Cardiac septum (tissue), 1 donor: ENCODE measurements at regions of chr10 and their contacts with region 1.

Region 1: GRCh38 chr10:94315024-94315451 is 47.7 kb downstream of the NOC3L start:
- DNase-seq: no peak

Region 2: DNA sequence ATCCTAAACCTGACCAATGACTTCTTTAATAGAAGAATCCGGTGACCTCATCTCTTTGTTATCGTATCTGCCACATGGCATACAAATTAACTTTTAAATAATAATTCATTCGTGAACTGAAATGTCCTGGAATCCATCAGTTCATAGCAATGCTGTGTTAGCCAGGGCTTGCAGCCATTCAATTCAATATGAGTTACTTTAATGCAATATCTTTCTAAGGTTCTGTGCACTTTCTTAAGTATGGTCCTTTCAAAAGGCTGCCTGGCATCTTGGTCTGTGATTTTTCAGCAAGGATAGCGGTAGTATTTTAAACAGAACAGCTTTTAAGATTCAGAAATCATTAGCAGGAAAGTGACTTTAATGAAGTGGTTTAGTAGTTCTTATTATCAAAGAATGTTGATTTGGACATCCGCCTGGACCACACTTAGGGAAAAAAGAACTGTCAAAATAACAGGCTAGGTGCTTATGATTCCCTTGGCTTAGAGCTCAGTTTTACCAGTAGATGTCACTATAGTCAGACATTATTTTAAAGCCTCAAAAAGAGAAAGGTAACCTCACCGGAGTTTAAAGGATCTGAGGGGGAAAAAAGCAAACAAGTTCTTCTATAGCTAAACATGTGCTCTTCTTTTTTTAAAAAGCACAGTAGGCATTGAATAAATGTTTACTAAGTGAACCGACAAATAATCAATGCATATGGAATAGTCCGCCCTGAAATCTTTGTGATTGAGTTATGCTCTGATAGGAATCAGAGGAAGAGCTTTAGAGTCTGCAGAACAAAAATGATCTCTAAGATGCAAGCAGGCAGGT is 398.6 kb before region 1 on chr10:
- intact Hi-C with region 1: loop called (anchors 5 kb)
- DNase-seq: no peak

Region 3: DNA sequence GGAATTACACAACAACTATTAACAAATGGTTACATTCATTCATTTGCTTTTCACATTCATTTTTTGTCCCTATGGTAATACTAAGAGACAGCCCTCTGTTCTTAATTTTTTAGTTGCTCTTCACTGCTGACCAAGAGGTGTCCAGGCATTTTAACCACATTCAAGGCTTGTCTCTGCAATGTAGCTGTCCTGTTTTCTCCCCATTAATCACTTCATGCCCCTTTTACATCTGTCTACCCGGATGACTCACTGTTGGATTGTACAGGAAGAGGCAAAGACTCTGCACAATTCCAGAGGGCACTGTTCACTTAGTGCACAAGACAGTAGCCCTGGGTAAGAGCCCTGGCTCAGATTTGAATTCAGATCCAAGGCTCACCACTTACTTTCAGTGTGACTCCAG is 120.8 kb before region 1 on chr10:
- intact Hi-C with region 1: no loop called
- DNase-seq: no peak

Region 4: DNA sequence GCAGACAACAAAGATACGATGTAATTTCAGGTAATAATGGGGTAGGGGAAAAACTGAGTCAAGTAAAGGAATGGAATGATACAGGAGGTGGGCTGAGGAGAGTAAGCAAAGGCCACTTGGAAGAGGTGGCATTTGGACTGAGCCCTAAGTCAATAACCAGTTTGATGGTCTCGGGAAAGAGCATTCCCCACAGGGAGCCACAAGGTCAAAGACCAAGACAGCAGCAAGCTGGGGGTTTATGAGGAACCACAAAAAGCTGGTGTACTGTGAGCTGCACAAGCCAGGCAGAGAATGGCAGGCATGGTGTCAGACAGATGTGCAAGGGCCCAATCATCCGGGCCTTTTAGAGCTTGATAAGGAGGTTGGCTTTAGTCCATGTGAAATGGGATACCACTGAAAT is 51.0 kb before region 1 on chr10:
- intact Hi-C with region 1: no loop called
- DNase-seq: no peak